ENCODE measurements at regions of chr1 and their contacts with region 1.

Region 1: DNA sequence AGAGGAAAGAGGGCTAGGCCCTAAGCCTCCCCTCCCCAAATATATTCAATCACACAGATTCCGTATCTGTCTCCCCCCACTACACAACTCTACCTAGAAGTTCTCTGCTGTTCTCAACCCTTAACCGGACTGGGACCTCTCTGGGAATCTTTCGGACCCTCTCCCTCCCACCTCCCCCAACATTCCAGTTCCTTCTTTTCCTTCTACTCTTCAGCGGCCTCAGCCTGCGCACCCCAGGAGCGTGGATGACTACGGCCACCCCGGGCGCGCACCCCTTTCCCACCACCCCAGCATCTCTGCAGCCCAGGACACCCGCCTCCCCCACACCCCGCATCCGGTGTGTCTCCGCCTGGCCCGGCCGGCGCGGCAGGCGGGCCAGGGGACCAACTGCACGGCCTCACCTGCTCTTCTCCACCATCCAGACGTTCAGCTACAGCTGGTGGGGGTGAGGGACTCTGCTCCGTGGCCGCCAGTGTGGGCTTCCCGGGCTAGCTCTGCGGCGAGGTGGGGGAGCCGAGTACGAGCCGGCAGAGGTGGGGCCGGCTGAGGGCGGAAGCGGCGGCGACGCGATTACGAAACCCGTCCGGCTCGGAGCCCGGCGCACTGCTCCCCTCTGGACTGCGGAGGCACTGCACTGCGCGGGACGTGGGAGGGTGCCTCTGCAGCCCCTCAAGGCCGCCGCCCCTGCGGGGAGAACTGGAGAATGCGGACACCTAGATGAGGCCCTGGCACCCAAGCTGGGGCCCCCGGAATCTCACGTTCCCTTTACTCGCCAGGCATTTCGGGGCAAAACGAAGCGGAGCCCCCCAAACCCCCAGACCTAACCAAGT is at the start of gene CDC42SE1:
- DNase-seq: peak; percentile 75 to 90 (median 82)
- ATAC-seq: peak; percentile 77 to 84
- H3K4me3 Mint-ChIP-seq: peak within 1 kb of the TSS; percentile 93 to 100 (median 98)
- H3K27ac Mint-ChIP-seq: peak within 1 kb of the TSS; percentile 88 to 99 (median 96)
- H3K4me1 Mint-ChIP-seq: peaks cover 35 to 70% (median 52%) of the 10 kb centered on the region in 4 donors
- H3K27me3 Mint-ChIP-seq: no peaks in the 10 kb centered on the region
- polyA plus RNA-seq, gene CDC42SE1: 77.9 to 89.3 (median 80.9) TPM

Region 2: DNA sequence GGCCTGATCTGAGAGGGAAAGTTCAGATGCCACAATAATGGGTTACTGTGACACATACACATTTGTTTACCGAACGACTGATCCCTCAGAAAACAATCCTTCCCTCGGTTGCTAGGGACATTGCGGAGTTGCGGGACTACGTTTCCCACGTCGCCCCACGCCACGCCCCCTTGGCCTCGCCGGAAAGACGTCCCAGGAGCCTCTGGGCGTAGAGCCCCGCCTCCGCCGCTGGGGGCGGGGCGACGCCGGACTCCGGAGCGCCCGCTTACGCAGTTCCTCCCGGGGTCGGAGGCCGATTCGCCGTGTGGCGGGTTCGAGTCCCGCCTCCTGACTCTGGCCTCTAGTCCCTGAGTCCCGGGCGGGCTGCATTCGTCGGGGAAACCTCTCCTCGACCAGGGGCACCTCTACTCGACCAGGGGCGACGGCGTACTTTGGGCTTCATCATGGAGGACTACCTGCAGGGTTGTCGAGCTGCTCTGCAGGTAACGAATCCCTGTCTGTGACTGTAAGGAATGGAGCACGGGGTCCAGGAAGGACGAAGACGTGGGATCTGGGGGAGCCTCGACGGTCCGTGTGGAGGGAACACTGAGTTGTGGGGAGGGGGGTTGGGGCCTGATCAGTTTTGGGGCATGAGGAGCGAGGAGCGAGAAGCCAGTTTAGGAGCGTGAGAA is 51.0 kb before region 1 on chr1 and contains the start of gene PRUNE1:
- POLR2A ChIA-PET with region 1: interaction called, 47 read pairs
- DNase-seq: peak; percentile 88 to 98 (median 94)
- ATAC-seq: peak; percentile 77 to 83
- H3K4me3 Mint-ChIP-seq: peak within 1 kb of the TSS; percentile 89 to 98 (median 96)
- H3K27ac Mint-ChIP-seq: peak within 1 kb of the TSS; percentile 95 to 99 (median 98)
- H3K4me1 Mint-ChIP-seq: peaks cover 37 to 91% (median 84%) of the 10 kb centered on the region in 4 donors
- H3K27me3 Mint-ChIP-seq: no peaks in the 10 kb centered on the region
- polyA plus RNA-seq, gene PRUNE1: 53.2 to 55.1 (median 54.9) TPM

Region 3: GRCh38 chr1:151024540-151025146 is 34.6 kb before region 1 on chr1:
- POLR2A ChIA-PET with region 1: interaction called, 56 read pairs
- DNase-seq: peak; percentile 77 to 94 (median 88)
- ATAC-seq: peak; percentile 100
- H3K4me3 Mint-ChIP-seq: peak overlapping the region in 9 of 10 donors; percentile 23 to 79 (median 56)
- H3K27ac Mint-ChIP-seq: peak overlapping the region; percentile 11 to 88 (median 71)
- H3K4me1 Mint-ChIP-seq: peaks cover 4 to 8% (median 7%) of the 10 kb centered on the region in 4 donors
- H3K27me3 Mint-ChIP-seq: no peaks in the 10 kb centered on the region

Region 4: GRCh38 chr1:151070474-151071276 is 11.4 kb after region 1 on chr1 and contains the start of gene GABPB2:
- POLR2A ChIA-PET with region 1: interaction called, 186 read pairs
- DNase-seq: peak; percentile 80 to 95 (median 86)
- ATAC-seq: peak; percentile 82
- H3K4me3 Mint-ChIP-seq: peak within 1 kb of the TSS; percentile 95 to 100 (median 100)
- H3K27ac Mint-ChIP-seq: peak within 1 kb of the TSS; percentile 98 to 100 (median 100)
- H3K4me1 Mint-ChIP-seq: peaks cover 12 to 42% (median 31%) of the 10 kb centered on the region in 4 donors
- H3K27me3 Mint-ChIP-seq: no peaks in the 10 kb centered on the region
- polyA plus RNA-seq, gene GABPB2: 4.8 to 16.4 (median 5.4) TPM

Region 5: GRCh38 chr1:151085953-151086559 is 26.8 kb after region 1 on chr1:
- POLR2A ChIA-PET with region 1: interaction called, 13 read pairs
- DNase-seq: no peak
- ATAC-seq: no peak
- H3K4me3 Mint-ChIP-seq: no peak overlapping the region
- H3K27ac Mint-ChIP-seq: peak overlapping the region in 2 of 10 donors; percentile 6 to 15
- H3K4me1 Mint-ChIP-seq: peaks cover 0 to 2% (median 0%) of the 10 kb centered on the region in 4 donors
- H3K27me3 Mint-ChIP-seq: no peaks in the 10 kb centered on the region

Region 6: GRCh38 chr1:151118021-151118420 is 58.7 kb after region 1 on chr1:
- POLR2A ChIA-PET with region 1: no interaction called
- DNase-seq: no peak
- ATAC-seq: no peak
- H3K4me3 Mint-ChIP-seq: no peak overlapping the region
- H3K27ac Mint-ChIP-seq: peak overlapping the region in 1 of 10 donors; percentile 25
- H3K4me1 Mint-ChIP-seq: no peaks in the 10 kb centered on the region
- H3K27me3 Mint-ChIP-seq: no peaks in the 10 kb centered on the region

Region 7: GRCh38 chr1:151130987-151131586 is 71.8 kb after region 1 on chr1:
- POLR2A ChIA-PET with region 1: interaction called, 17 read pairs
- DNase-seq: peak; percentile 74 to 94 (median 87)
- ATAC-seq: peak; percentile 100
- H3K4me3 Mint-ChIP-seq: peak overlapping the region; percentile 76 to 91 (median 84)
- H3K27ac Mint-ChIP-seq: peak overlapping the region; percentile 69 to 97 (median 92)
- H3K4me1 Mint-ChIP-seq: peaks cover 0 to 13% (median 12%) of the 10 kb centered on the region in 4 donors
- H3K27me3 Mint-ChIP-seq: no peaks in the 10 kb centered on the region